MCF 10A (cell line): ENCODE measurements at regions of chr3 and their contacts with region 1.

Region 1: DNA sequence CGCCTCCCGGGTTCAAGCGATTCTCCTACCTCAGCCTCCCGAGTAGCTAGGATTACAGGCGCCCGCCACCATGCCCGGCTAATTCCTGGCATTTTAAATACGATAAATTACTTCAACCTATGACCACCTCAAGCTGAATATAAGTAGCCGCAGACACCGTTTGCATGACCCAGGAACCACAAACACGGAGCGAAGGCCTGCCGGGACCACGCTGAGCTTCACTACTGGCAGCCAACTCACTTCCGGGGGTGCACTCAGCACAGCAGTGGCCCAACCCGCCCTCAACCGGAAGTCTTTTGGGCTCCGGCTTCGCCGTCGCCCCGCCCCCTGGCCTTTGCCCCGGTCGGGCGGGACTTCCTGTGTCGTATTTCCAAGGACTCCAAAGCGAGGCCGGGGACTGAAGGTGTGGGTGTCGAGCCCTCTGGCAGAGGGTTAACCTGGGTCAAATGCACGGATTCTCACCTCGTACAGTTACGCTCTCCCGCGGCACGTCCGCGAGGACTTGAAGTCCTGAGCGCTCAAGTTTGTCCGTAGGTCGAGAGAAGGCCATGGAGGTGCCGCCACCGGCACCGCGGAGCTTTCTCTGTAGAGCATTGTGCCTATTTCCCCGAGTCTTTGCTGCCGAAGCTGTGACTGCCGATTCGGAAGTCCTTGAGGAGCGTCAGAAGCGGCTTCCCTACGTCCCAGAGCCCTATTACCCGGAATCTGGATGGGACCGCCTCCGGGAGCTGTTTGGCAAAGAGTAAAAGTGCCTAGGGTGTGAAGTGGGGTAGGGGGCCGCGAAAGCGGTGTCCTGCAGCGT is at the start of gene TIMMDC1:
- DNase-seq: peak; percentile 98
- H3K4me3 Mint-ChIP-seq: peak within 1 kb of the TSS; percentile 99
- H3K27ac Mint-ChIP-seq: peak within 1 kb of the TSS; percentile 98
- H3K4me1 Mint-ChIP-seq: peaks cover 16% of the 10 kb centered on the region
- H3K27me3 Mint-ChIP-seq: no peaks in the 10 kb centered on the region
- CTCF ChIP-seq: no peak
- total RNA-seq, gene TIMMDC1: 108 and 113 TPM in 2 replicates

Region 2: GRCh38 chr3:119463171-119464169 is 34.9 kb before region 1 on chr3 and contains the start of gene TMEM39A:
- CTCF ChIA-PET with region 1: interaction called, 13 read pairs
- POLR2A ChIA-PET with region 1: interaction called, 118 read pairs
- intact Hi-C with region 1: loop called (anchors 2 kb)
- DNase-seq: peak; percentile 98
- H3K4me3 Mint-ChIP-seq: peak within 1 kb of the TSS; percentile 89
- H3K27ac Mint-ChIP-seq: peak within 1 kb of the TSS; percentile 94
- H3K4me1 Mint-ChIP-seq: peaks cover 28% of the 10 kb centered on the region
- H3K27me3 Mint-ChIP-seq: no peaks in the 10 kb centered on the region
- CTCF ChIP-seq: no peak
- total RNA-seq, gene TMEM39A: 87.1 and 105 TPM in 2 replicates

Region 3: DNA sequence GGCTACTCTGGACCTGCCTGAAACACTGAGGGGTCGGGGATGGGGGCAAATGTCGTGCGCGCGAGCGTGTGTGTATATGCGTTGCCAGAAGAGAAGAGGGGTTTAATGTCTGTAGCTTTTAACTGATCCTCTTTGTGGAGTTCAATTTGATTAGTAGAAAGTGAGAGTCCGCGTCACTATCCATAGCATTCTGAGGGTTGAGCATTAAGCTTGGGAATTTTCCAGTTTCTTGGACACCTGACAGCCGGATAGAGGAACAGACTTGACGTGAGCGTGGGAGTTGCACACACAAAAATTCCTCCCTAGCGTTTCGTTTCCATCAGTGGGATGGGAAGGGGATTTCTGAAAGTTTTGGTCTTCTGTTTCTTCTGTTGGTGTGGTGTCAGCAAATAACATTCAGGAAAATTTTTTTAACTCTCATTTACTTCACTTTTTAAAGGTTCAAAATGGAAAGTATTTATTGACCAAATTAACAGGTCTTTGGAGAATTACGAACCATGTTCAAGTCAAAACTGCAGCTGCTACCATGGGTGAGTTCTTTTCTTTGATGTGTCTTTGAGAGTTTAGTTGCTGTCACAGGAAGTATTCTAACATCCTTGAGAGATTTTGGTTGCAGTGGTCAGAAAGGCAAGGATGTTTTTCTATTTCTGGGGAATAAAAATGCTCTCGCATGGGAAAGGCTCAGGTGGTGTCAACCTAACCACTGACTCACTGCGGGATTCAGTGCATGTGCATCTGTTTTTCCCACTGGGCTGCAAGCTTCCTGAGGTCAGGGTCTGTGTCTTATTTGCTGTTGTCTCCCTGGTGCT is 28.8 kb before region 1 on chr3:
- CTCF ChIA-PET with region 1: interaction called, 13 read pairs
- POLR2A ChIA-PET with region 1: interaction called, 118 read pairs
- intact Hi-C with region 1: no loop called
- DNase-seq: no peak
- H3K4me3 Mint-ChIP-seq: peak overlapping the region; percentile 94
- H3K27ac Mint-ChIP-seq: peak overlapping the region; percentile 94
- H3K4me1 Mint-ChIP-seq: peaks cover 25% of the 10 kb centered on the region
- H3K27me3 Mint-ChIP-seq: no peaks in the 10 kb centered on the region
- CTCF ChIP-seq: no peak

Region 4: DNA sequence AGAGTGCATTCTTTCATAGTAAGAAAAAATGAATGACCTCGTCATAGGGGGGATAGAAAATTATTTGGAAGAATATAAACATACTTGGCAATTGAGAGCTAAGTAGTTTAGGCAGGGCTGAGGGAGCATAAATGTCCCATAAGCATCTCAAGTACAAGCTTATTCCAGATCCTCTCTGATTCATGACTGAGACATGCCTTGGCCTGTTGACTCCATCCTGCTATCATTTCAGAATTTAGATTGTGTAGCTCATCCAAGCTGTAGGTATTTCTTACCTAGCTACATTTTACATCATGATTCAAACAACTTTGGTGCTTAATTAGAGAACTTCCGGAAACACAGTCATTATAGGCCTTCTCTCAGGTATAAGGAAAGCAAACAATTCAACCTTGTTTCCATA is 17.3 kb before region 1 on chr3:
- CTCF ChIA-PET with region 1: interaction called, 4 read pairs
- POLR2A ChIA-PET with region 1: interaction called, 37 read pairs
- intact Hi-C with region 1: no loop called
- DNase-seq: no peak
- H3K4me3 Mint-ChIP-seq: no peak overlapping the region
- H3K27ac Mint-ChIP-seq: peak overlapping the region; percentile 79
- H3K4me1 Mint-ChIP-seq: peaks cover 5% of the 10 kb centered on the region
- H3K27me3 Mint-ChIP-seq: no peaks in the 10 kb centered on the region
- CTCF ChIP-seq: no peak

Region 5: GRCh38 chr3:119488131-119488530 is 10.3 kb before region 1 on chr3:
- CTCF ChIA-PET with region 1: interaction called, 6 read pairs
- POLR2A ChIA-PET with region 1: interaction called, 19 read pairs
- intact Hi-C with region 1: no loop called
- DNase-seq: no peak
- H3K4me3 Mint-ChIP-seq: no peak overlapping the region
- H3K27ac Mint-ChIP-seq: no peak overlapping the region
- H3K4me1 Mint-ChIP-seq: no peaks in the 10 kb centered on the region
- H3K27me3 Mint-ChIP-seq: no peaks in the 10 kb centered on the region
- CTCF ChIP-seq: no peak

Region 6: DNA sequence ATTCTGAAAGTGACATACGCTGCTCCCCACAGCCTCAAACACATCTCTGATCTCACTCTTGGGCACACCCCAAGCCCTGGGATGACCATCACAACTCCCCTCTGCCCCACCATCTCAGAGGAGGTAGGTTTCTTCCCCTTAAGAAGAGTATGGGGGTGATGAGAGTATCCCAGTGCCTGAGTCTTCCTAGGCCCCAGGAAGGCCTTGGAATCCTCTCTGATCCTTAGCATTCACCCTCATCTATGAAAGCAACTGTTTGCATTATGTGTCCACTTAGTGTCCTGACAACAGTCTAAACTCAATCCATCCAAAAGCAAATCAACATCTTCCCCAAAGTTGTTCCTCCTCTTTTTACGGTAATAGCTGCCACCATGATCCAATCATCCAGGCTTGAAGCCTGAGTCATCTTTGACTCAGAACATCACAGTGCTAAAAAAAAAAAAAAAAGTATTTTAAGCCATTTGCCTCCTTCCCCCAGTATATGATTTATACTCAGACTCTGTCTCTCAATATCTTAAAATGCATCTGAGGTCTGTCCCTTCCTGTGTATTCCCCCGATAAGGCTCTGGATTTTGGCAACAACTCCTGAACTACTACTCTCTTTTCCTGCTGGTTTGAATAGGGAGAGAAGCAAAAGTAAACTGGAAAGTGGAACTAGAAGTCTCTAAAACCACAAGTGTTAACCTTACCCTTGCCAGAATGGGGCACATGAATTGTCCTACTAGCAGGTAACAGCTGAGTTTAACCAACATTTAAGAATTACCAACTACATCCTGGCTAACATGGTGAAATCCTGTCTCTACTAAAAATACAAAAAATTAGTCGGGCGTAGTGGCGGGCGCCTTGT is 139.5 kb after region 1 on chr3:
- CTCF ChIA-PET with region 1: no interaction called
- POLR2A ChIA-PET with region 1: interaction called, 16 read pairs
- intact Hi-C with region 1: no loop called
- DNase-seq: peak; percentile 58
- H3K4me3 Mint-ChIP-seq: no peak overlapping the region
- H3K27ac Mint-ChIP-seq: peak overlapping the region; percentile 90
- H3K4me1 Mint-ChIP-seq: peaks cover 32% of the 10 kb centered on the region
- H3K27me3 Mint-ChIP-seq: no peaks in the 10 kb centered on the region
- CTCF ChIP-seq: no peak

Region 7: DNA sequence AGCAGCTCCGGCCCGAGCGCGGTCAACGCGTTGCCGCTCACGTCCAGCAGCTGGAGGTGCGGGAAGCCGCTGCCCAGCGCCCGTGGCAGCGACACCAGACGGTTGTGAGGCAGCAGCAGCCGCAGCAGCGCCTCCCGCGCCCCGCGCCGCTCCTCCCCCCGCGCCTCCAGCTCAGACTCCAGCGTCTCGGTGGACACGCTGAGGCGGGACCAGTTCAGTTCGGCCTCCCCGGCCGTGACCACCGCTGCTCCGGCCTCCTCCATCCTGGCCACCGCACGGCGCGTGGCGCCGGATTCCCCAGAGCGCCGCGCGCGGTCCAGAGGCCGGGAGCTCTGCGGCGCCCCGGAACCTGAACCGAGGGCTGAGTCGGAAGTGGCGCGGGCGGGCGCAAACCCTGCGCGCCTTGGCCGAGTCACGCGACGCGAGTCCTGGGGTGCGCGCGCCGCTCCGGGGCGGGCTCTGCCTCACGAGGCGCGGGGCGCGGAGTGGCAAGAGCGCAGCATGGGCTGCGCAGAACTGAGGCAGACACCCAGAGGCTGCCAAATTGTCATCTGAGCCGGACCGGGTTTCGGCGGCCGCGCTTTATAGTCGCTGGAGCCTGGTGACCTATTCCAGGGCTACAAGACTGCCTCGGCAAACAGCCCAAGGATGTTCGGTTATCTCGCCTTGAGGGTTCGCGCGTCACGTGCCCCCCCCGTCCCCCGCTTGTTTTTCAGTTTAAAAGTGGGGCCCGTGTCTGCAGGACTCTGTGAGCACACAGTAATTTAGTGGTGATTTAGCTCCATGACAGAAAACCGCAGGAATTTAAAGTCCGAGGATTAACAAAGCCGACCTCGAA is 850.8 kb after region 1 on chr3 and contains the start of gene LRRC58:
- CTCF ChIA-PET with region 1: no interaction called
- POLR2A ChIA-PET with region 1: interaction called, 10 read pairs
- intact Hi-C with region 1: no loop called
- DNase-seq: peak; percentile 95
- H3K4me3 Mint-ChIP-seq: peak within 1 kb of the TSS; percentile 77
- H3K27ac Mint-ChIP-seq: peak within 1 kb of the TSS; percentile 83
- H3K4me1 Mint-ChIP-seq: peaks cover 34% of the 10 kb centered on the region
- H3K27me3 Mint-ChIP-seq: no peaks in the 10 kb centered on the region
- CTCF ChIP-seq: peak; percentile 8
- total RNA-seq, gene LRRC58: 25.8 and 28.8 TPM in 2 replicates